ENCODE measurements at regions of chr22 and their contacts with region 1.

Region 1: DNA sequence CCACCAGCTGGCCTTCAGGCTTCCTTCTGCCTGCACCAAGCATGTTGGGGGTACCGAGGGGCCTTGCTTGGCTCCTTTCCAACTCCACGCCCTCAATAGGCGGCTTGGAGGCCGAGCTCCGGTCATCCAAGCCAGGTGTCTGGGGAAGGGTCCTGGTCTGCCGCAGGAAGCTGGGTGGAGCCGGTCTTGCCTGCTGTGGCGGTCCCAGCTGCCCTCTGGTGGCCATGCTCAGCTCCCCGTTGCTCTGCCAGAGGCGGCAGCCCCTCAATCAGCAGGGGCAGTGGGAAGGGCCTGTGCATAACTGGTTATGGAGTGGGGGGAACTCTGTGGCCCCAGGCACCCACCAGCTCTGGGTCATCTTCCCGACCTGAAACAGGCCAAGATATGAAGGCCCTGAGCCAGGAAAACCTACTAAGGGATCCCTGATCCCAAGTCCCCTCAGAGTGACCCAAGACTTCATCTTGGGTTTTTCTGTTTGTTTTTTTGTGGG is 3.2 kb downstream of the ARVCF start:
- DNase-seq: peak; percentile 67
- H3K4me3 ChIP-seq: no peak overlapping the region
- H3K27ac ChIP-seq: no peak overlapping the region
- H3K4me1 ChIP-seq: peaks cover 8% of the 10 kb centered on the region
- H3K27me3 ChIP-seq: no peaks in the 10 kb centered on the region
- CTCF ChIP-seq: peak; percentile 91 to 97
- POLR2A ChIP-seq: no peak

Region 2: DNA sequence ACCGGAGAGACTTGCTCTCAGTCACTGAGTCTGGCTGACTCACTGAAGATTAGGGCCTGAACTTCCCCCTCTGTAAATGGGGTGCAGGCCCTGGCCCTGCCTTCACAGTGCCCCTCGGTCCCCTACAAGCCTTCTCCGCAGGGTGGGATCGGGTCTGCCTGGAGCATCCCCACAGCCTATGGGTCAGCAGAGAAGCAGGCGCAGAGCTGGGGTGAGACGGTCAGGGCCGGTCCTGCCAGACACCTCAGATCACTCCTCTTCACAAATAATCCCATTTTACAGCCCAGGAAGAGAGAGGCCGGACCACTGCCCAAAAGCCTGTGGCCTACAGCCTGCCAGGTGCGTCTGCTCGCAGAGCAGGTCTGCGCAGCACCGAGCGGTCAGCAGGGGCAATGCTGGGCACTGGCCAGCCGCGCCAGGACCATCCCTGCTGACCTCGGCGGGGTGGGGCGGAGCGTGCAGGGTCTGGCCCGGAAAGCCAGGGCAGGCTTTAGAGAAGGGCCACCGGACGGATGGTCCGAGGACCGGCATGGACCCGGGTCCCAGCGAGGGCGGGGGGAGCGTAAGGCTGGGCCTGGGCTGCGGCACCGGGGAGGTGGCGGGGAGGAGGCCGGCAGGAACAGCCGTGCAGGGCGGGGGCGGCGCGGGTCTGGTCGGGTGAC is 299.6 kb before region 1 on chr22:
- CTCF ChIA-PET with region 1: no interaction called
- POLR2A ChIA-PET with region 1: no interaction called
- dilution Hi-C with region 1: no loop called
- intact Hi-C with region 1: no loop called
- DNase-seq: no peak
- H3K4me3 ChIP-seq: peak overlapping the region in 2 of 3 experiments; percentile 20 to 69
- H3K27ac ChIP-seq: no peak overlapping the region
- H3K4me1 ChIP-seq: peaks cover 18% of the 10 kb centered on the region
- H3K27me3 ChIP-seq: no peaks in the 10 kb centered on the region
- CTCF ChIP-seq: peak in 1 of 2 donors; percentile 6
- POLR2A ChIP-seq: no peak

Region 3: DNA sequence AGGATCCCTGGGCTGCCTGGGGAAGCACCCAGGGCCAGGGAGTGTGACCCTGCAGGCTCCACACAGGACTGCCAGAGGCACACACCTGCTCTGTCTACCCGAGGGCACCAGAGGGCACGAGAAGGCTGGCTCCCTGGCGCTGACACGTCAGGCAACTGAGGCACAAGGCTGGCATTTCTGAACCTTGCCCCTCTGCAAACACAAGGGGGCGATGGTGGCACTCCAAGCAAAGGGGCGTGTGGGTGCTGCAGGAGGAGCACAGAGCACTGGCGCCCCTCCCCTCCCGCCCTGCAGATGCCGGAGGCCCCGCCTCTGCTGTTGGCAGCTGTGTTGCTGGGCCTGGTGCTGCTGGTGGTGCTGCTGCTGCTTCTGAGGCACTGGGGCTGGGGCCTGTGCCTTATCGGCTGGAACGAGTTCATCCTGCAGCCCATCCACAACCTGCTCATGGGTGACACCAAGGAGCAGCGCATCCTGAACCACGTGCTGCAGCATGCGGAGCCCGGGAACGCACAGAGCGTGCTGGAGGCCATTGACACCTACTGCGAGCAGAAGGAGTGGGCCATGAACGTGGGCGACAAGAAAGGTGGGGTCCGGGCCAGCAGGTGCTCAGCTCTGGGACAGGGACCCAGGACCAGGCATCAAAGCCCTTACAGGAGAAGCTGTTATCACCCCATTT is 51.1 kb before region 1 on chr22:
- CTCF ChIA-PET with region 1: interaction called, 304 read pairs
- POLR2A ChIA-PET with region 1: no interaction called
- dilution Hi-C with region 1: no loop called
- intact Hi-C with region 1: no loop called
- DNase-seq: peak; percentile 75
- H3K4me3 ChIP-seq: no peak overlapping the region
- H3K27ac ChIP-seq: peak overlapping the region; percentile 4
- H3K4me1 ChIP-seq: peaks cover 28% of the 10 kb centered on the region
- H3K27me3 ChIP-seq: no peaks in the 10 kb centered on the region
- CTCF ChIP-seq: peak; percentile 54 to 83
- POLR2A ChIP-seq: no peak

Region 4: GRCh38 chr22:19970479-19971275 is 42.8 kb before region 1 on chr22:
- CTCF ChIA-PET with region 1: interaction called, 304 read pairs
- POLR2A ChIA-PET with region 1: interaction called, 8 read pairs
- dilution Hi-C with region 1: no loop called
- intact Hi-C with region 1: loop called (anchors 1 kb)
- DNase-seq: peak; percentile 56
- H3K4me3 ChIP-seq: no peak overlapping the region
- H3K27ac ChIP-seq: no peak overlapping the region
- H3K4me1 ChIP-seq: peaks cover 26% of the 10 kb centered on the region
- H3K27me3 ChIP-seq: no peaks in the 10 kb centered on the region
- CTCF ChIP-seq: peak; percentile 69 to 96
- POLR2A ChIP-seq: no peak

Region 5: GRCh38 chr22:19981118-19981955 is 32.1 kb before region 1 on chr22:
- CTCF ChIA-PET with region 1: interaction called, 78 read pairs
- POLR2A ChIA-PET with region 1: interaction called, 6 read pairs
- dilution Hi-C with region 1: no loop called
- intact Hi-C with region 1: loop called (anchors 1 kb)
- DNase-seq: no peak
- H3K4me3 ChIP-seq: no peak overlapping the region
- H3K27ac ChIP-seq: no peak overlapping the region
- H3K4me1 ChIP-seq: peaks cover 26% of the 10 kb centered on the region
- H3K27me3 ChIP-seq: no peaks in the 10 kb centered on the region
- CTCF ChIP-seq: no peak
- POLR2A ChIP-seq: no peak

Region 6: GRCh38 chr22:19986410-19987341 is 26.8 kb before region 1 on chr22:
- CTCF ChIA-PET with region 1: interaction called, 78 read pairs
- POLR2A ChIA-PET with region 1: interaction called, 6 read pairs
- dilution Hi-C with region 1: no loop called
- intact Hi-C with region 1: loop called (anchors 1 kb)
- DNase-seq: peak; percentile 77
- H3K4me3 ChIP-seq: peak overlapping the region; percentile 67 to 87 (median 78)
- H3K27ac ChIP-seq: peak overlapping the region; percentile 80
- H3K4me1 ChIP-seq: peaks cover 26% of the 10 kb centered on the region
- H3K27me3 ChIP-seq: no peaks in the 10 kb centered on the region
- CTCF ChIP-seq: peak in 1 of 2 donors; percentile 5
- POLR2A ChIP-seq: peak; percentile 76

Region 7: GRCh38 chr22:19995626-19996335 is 17.6 kb before region 1 on chr22:
- CTCF ChIA-PET with region 1: interaction called, 32 read pairs
- POLR2A ChIA-PET with region 1: no interaction called
- dilution Hi-C with region 1: no loop called
- intact Hi-C with region 1: no loop called
- DNase-seq: peak; percentile 28
- H3K4me3 ChIP-seq: no peak overlapping the region
- H3K27ac ChIP-seq: no peak overlapping the region
- H3K4me1 ChIP-seq: peaks cover 23% of the 10 kb centered on the region
- H3K27me3 ChIP-seq: no peaks in the 10 kb centered on the region
- CTCF ChIP-seq: no peak
- POLR2A ChIP-seq: no peak